ENCODE measurements at regions of chr7 and their contacts with region 1.

Region 1: DNA sequence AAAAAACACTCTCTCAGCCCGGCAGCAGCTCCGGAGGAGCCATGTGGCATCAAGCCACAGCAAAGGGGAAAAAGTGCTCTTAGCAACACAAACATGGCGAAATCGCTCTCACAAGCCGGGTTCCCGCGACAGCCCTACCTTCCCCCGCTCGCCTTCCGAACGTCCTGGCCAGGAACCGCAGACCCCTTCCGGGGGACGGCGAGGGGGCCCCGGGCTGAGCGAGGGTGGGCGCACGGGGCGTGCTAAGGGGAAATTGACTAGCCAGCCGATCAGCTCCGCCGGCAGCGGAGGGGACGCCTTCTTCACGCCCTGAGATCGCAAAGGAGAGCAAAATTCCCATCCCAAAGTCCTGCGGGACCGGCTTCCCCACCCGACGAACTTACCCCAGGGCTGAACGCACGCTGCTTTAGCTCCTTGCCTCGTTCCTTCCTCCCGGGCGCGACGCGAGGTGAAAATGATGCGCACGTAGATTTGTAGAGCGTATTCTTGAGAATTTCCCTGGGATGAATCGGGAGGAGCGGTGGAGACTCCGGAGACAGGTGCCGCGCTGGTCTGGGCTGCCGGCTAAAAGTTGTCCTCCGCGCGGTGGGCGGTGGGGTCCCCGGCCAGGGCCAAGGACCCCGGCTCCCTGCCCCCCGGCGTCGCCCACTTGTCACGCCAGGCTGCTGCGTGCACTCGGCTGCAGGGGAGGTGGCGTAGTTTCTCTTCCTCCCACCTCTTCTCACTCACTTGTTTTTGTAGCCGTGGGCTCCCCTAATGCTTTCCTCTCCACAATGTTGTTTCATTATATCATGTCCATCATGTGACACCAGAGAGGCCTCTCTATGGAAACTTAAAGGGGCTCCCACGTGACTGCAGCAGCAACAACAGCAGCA is 220.1 kb upstream of the MKLN1 start:
- DNase-seq: peak; percentile 47 to 93 (median 77)
- ATAC-seq: peak; percentile 16
- H3K4me3 ChIP-seq: peak overlapping the region; percentile 98 to 99
- H3K4me3 Mint-ChIP-seq: peak overlapping the region; percentile 88
- H3K27ac ChIP-seq: peak overlapping the region; percentile 98 to 100
- H3K27ac Mint-ChIP-seq: peak overlapping the region; percentile 94
- H3K4me1 ChIP-seq: peaks cover 58% of the 10 kb centered on the region
- H3K4me1 Mint-ChIP-seq: peaks cover 71% of the 10 kb centered on the region
- H3K27me3 ChIP-seq: no peaks in the 10 kb centered on the region
- H3K27me3 Mint-ChIP-seq: no peaks in the 10 kb centered on the region
- CTCF ChIP-seq: no peak

Region 2: DNA sequence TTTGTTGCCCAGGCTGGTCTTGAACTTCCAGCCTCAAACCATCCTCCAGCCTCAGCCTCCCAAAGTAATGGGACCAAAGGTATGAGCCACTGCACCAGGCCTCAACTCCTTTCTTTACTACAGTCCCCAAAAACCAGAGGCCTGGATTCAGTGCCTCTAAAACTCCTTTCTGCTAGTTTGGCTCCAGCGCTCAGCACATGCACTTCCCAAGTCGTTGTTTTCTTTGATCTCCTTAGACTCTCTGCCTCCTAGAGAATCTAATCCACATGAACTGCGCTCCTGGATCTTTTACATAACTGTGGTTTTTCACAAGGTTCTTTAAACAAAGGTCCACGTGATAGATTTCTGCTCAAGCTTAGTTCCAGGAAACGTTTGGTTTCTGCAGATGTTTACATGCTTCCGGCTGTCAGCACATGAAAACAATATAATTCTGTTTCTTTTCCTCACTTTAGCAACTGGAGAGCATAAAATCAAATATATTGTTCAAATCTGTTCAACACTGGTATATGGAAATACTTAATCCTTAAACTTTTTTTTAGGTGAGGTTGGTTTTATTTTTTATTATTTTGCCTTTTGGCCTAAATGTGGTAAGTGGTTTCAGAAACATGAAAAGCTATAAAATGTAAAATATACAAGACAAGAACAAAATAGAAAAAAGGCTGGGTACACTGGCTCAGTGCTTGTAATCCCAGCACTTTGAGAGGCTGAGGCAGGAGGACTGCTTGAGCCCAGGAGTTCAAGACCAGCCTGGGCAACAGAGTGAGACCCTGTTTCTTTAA is 50.4 kb before region 1 on chr7:
- CTCF ChIA-PET with region 1: interaction called, 3 read pairs
- POLR2A ChIA-PET with region 1: interaction called, 24 read pairs
- intact Hi-C with region 1: loop called in 1 of 2 experiments (anchors 10 kb)
- DNase-seq: peak in 2 of 9 experiments; percentile 68 to 84
- ATAC-seq: peak; percentile 44
- H3K4me3 ChIP-seq: peak overlapping the region in 1 of 2 experiments; percentile 18
- H3K4me3 Mint-ChIP-seq: peak overlapping the region; percentile 77
- H3K27ac ChIP-seq: peak overlapping the region; percentile 66 to 82
- H3K27ac Mint-ChIP-seq: peak overlapping the region; percentile 96
- H3K4me1 ChIP-seq: peaks cover 73% of the 10 kb centered on the region
- H3K4me1 Mint-ChIP-seq: peaks cover 78% of the 10 kb centered on the region
- H3K27me3 ChIP-seq: no peaks in the 10 kb centered on the region
- H3K27me3 Mint-ChIP-seq: no peaks in the 10 kb centered on the region
- CTCF ChIP-seq: no peak

Region 3: DNA sequence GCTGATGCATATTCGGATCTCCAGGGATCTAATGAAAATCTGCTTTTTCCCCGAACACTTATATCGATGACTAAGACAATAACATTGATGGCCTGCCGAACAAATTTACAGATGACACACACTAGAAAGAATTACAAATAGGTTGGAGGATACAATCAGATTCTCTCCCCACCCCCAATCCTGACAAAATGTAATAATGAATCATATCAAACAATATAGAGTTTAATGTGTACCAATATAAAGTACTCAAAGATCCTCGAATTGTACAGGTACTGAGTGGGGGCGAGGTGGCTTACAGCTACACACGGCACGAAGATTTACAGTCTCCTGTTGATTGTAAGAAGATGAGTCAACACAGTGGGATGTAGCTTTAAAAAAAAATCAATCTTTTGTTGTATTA is 37.5 kb after region 1 on chr7:
- CTCF ChIA-PET with region 1: no interaction called
- POLR2A ChIA-PET with region 1: no interaction called
- intact Hi-C with region 1: loop called in 1 of 2 experiments (anchors 5 kb)
- DNase-seq: no peak
- ATAC-seq: no peak
- H3K4me3 ChIP-seq: no peak overlapping the region
- H3K4me3 Mint-ChIP-seq: no peak overlapping the region
- H3K27ac ChIP-seq: no peak overlapping the region
- H3K27ac Mint-ChIP-seq: no peak overlapping the region
- H3K4me1 ChIP-seq: no peaks in the 10 kb centered on the region
- H3K4me1 Mint-ChIP-seq: no peaks in the 10 kb centered on the region
- H3K27me3 ChIP-seq: no peaks in the 10 kb centered on the region
- H3K27me3 Mint-ChIP-seq: peaks cover 5% of the 10 kb centered on the region
- CTCF ChIP-seq: no peak

Region 4: GRCh38 chr7:131231381-131232220 is 124.0 kb after region 1 on chr7:
- CTCF ChIA-PET with region 1: no interaction called
- POLR2A ChIA-PET with region 1: interaction called, 13 read pairs
- intact Hi-C with region 1: loop called (anchors 1 kb)
- DNase-seq: peak; percentile 38 to 87 (median 66)
- ATAC-seq: peak; percentile 81
- H3K4me3 ChIP-seq: peak overlapping the region; percentile 13 to 31
- H3K4me3 Mint-ChIP-seq: peak overlapping the region; percentile 68
- H3K27ac ChIP-seq: peak overlapping the region; percentile 63 to 66
- H3K27ac Mint-ChIP-seq: peak overlapping the region; percentile 91
- H3K4me1 ChIP-seq: peaks cover 32% of the 10 kb centered on the region
- H3K4me1 Mint-ChIP-seq: peaks cover 35% of the 10 kb centered on the region
- H3K27me3 ChIP-seq: no peaks in the 10 kb centered on the region
- H3K27me3 Mint-ChIP-seq: no peaks in the 10 kb centered on the region
- CTCF ChIP-seq: no peak

Region 5: GRCh38 chr7:131327626-131328376 is 220.2 kb after region 1 on chr7 and contains the start of gene MKLN1:
- CTCF ChIA-PET with region 1: no interaction called
- POLR2A ChIA-PET with region 1: interaction called, 29 read pairs
- intact Hi-C with region 1: loop called (anchors 1 to 2 kb)
- DNase-seq: peak; percentile 75 to 94 (median 89)
- ATAC-seq: peak; percentile 94
- H3K4me3 ChIP-seq: peak within 1 kb of the TSS; percentile 95 to 100
- H3K4me3 Mint-ChIP-seq: peak within 1 kb of the TSS; percentile 92
- H3K27ac ChIP-seq: peak within 1 kb of the TSS; percentile 85 to 95
- H3K27ac Mint-ChIP-seq: peak within 1 kb of the TSS; percentile 97
- H3K4me1 ChIP-seq: peaks cover 33% of the 10 kb centered on the region
- H3K4me1 Mint-ChIP-seq: peaks cover 68% of the 10 kb centered on the region
- H3K27me3 ChIP-seq: no peaks in the 10 kb centered on the region
- H3K27me3 Mint-ChIP-seq: no peaks in the 10 kb centered on the region
- CTCF ChIP-seq: no peak
- total RNA-seq, gene MKLN1: 43.2 to 54.5 TPM

Region 6: DNA sequence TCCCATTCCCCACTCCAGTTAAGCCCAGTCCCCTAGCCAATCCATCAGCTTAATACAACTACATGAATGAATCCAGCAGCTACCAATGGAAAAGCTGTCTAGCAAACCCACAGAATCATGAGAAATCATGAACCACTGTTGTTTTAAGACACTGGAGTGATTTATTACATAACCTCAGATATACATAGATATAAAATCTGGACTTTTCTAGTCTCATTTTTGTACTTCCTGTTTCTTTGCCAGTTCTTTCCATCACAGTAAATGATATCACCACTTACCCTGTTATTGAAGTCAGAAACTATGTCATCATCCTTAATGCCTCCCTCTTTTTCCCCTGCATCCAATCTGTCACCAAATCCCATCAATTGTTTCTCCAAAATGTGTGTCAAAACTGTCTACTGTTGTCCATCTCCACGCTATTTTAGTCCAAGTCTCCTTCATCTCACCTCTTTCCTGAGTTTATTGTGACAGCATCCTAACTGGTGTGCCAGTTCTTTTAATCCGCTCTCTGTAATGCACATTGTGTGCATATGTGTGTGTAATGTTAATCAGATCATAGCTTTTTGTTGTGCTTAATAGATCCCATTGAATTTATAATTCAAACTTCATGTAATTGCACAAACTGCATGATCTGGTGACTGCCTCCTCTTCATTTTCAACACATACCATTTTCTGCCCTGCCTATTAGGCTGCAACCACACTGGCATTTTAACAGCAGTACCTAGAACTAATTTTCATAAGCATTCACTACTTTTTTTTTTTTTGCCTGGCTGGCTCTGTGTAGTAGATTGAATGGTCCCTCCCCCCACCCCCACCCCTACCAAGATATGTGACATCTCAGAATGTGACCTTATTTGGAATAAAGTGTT is 276.1 kb after region 1 on chr7:
- CTCF ChIA-PET with region 1: no interaction called
- POLR2A ChIA-PET with region 1: no interaction called
- intact Hi-C with region 1: no loop called
- DNase-seq: no peak
- ATAC-seq: no peak
- H3K4me3 ChIP-seq: no peak overlapping the region
- H3K4me3 Mint-ChIP-seq: no peak overlapping the region
- H3K27ac ChIP-seq: no peak overlapping the region
- H3K27ac Mint-ChIP-seq: no peak overlapping the region
- H3K4me1 ChIP-seq: peaks cover 6% of the 10 kb centered on the region
- H3K4me1 Mint-ChIP-seq: peaks cover 43% of the 10 kb centered on the region
- H3K27me3 ChIP-seq: no peaks in the 10 kb centered on the region
- H3K27me3 Mint-ChIP-seq: no peaks in the 10 kb centered on the region
- CTCF ChIP-seq: no peak